Endothelial cell of umbilical vein (primary cell): ENCODE measurements at regions of chr16 and their contacts with region 1.

Region 1: GRCh38 chr16:67393035-67393787 is at the start of gene TPPP3:
- DNase-seq: peak; percentile 81
- H3K4me3 ChIP-seq: peak within 1 kb of the TSS in 2 of 3 experiments; percentile 9 to 26
- H3K27ac ChIP-seq: no peak within 1 kb of the TSS
- H3K4me1 ChIP-seq: peaks cover 13% of the 10 kb centered on the region
- H3K27me3 ChIP-seq: peaks cover 9 to 11% of the 10 kb centered on the region in 2 experiments
- CTCF ChIP-seq: peak; percentile 63 to 85
- POLR2A ChIP-seq: no peak
- total RNA-seq, gene TPPP3: 1.3 and 2.0 TPM in 2 replicates

Region 2: GRCh38 chr16:65876056-65876408 is 1517.2 kb before region 1 on chr16:
- CTCF ChIA-PET with region 1: no interaction called
- POLR2A ChIA-PET with region 1: no interaction called
- dilution Hi-C with region 1: no loop called
- intact Hi-C with region 1: no loop called
- DNase-seq: no peak
- H3K4me3 ChIP-seq: no peak overlapping the region
- H3K27ac ChIP-seq: no peak overlapping the region
- H3K4me1 ChIP-seq: no peaks in the 10 kb centered on the region
- H3K27me3 ChIP-seq: no peaks in the 10 kb centered on the region
- CTCF ChIP-seq: no peak
- POLR2A ChIP-seq: no peak

Region 3: GRCh38 chr16:67191995-67192681 is 201.1 kb before region 1 on chr16 and contains the start of gene E2F4:
- CTCF ChIA-PET with region 1: no interaction called
- POLR2A ChIA-PET with region 1: no interaction called
- dilution Hi-C with region 1: no loop called
- intact Hi-C with region 1: loop called (anchors 10 kb)
- DNase-seq: peak; percentile 88
- H3K4me3 ChIP-seq: peak within 1 kb of the TSS; percentile 54 to 83 (median 57)
- H3K27ac ChIP-seq: peak within 1 kb of the TSS; percentile 88
- H3K4me1 ChIP-seq: peaks cover 36% of the 10 kb centered on the region
- H3K27me3 ChIP-seq: no peaks in the 10 kb centered on the region
- CTCF ChIP-seq: no peak
- POLR2A ChIP-seq: peak; percentile 93
- total RNA-seq, gene E2F4: 110 and 112 TPM in 2 replicates

Region 4: GRCh38 chr16:67279296-67280089 is 113.7 kb before region 1 on chr16 and contains the start of gene PLEKHG4:
- CTCF ChIA-PET with region 1: interaction called, 4 read pairs
- POLR2A ChIA-PET with region 1: no interaction called
- dilution Hi-C with region 1: no loop called
- intact Hi-C with region 1: loop called (anchors 1 kb)
- DNase-seq: peak; percentile 71
- H3K4me3 ChIP-seq: peak within 1 kb of the TSS; percentile 16 to 60 (median 51)
- H3K27ac ChIP-seq: peak within 1 kb of the TSS; percentile 78
- H3K4me1 ChIP-seq: peaks cover 21% of the 10 kb centered on the region
- H3K27me3 ChIP-seq: no peaks in the 10 kb centered on the region
- CTCF ChIP-seq: peak; percentile 73
- POLR2A ChIP-seq: no peak
- total RNA-seq, gene PLEKHG4: 23.9 and 26.6 TPM in 2 replicates

Region 5: DNA sequence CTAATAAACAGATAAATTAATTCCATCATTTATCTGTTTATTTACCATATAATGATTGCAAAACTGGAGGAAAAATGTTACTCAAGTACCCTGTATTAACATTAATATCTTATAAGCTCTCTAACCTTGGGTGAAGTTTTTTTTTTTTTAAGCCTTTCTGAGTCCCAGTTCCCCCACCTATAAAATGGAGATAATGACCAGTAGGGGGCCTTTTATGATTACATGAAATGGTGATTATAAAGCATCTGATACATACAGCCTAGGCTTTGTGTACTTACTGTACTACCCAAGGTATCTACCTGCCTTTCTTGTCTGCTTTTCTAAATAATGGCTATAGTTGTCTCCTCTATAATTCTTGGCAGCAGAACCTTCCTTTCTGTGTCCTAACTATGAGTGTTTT is 44.0 kb before region 1 on chr16:
- CTCF ChIA-PET with region 1: interaction called, 7 read pairs
- POLR2A ChIA-PET with region 1: no interaction called
- dilution Hi-C with region 1: no loop called
- intact Hi-C with region 1: loop called (anchors 1 kb)
- DNase-seq: peak; percentile 59
- H3K4me3 ChIP-seq: no peak overlapping the region
- H3K27ac ChIP-seq: no peak overlapping the region
- H3K4me1 ChIP-seq: peaks cover 23% of the 10 kb centered on the region
- H3K27me3 ChIP-seq: no peaks in the 10 kb centered on the region
- CTCF ChIP-seq: peak; percentile 32 to 49
- POLR2A ChIP-seq: no peak

Region 6: GRCh38 chr16:67406111-67406890 is 13.1 kb after region 1 on chr16:
- CTCF ChIA-PET with region 1: interaction called, 35 read pairs
- POLR2A ChIA-PET with region 1: no interaction called
- dilution Hi-C with region 1: no loop called
- intact Hi-C with region 1: no loop called
- DNase-seq: peak; percentile 75
- H3K4me3 ChIP-seq: no peak overlapping the region
- H3K27ac ChIP-seq: peak overlapping the region; percentile 61
- H3K4me1 ChIP-seq: peaks cover 20% of the 10 kb centered on the region
- H3K27me3 ChIP-seq: no peaks in the 10 kb centered on the region
- CTCF ChIP-seq: no peak
- POLR2A ChIP-seq: peak; percentile 14